ENCODE measurements at regions of chr11 and their contacts with region 1.

Region 1: DNA sequence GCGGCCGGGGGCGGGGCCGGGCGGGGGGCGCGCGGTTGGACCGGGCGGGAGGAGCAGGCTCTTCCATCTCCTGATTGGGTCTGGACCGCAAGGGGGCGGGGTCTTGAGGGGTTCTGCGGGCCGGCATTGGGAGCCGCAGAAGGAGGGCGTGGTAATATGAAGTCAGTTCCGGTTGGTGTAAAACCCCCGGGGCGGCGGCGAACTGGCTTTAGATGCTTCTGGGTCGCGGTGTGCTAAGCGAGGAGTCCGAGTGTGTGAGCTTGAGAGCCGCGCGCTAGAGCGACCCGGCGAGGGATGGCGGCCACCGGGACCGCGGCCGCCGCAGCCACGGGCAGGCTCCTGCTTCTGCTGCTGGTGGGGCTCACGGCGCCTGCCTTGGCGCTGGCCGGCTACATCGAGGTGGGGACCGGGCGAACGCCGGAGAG is at the start of gene APLP2:
- DNase-seq: peak; percentile 96
- H3K4me3 ChIP-seq: peak within 1 kb of the TSS; percentile 80 to 91 (median 83)
- H3K27ac ChIP-seq: peak within 1 kb of the TSS; percentile 77
- H3K4me1 ChIP-seq: peaks cover 22% of the 10 kb centered on the region
- H3K27me3 ChIP-seq: no peaks in the 10 kb centered on the region
- CTCF ChIP-seq: no peak
- total RNA-seq, gene APLP2: 348 to 450 TPM

Region 2: DNA sequence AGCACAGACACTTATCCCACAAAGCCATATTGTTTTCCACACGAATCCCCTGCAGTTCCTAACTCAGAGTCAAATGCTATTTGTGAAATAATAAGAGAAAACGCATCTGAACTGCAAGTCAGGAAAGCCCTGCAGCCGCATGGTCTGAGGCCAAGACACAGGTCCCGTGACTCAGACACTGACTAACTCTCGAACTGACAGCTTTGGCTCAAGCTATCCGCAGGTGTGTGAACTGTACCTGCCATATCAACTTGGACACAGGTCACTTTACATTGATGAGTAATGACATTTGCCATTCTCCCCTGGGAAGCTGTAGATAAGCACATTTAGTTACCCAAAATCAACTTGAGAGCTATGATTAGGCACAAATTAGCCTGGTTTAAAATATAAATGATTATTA is 139.4 kb before region 1 on chr11:
- CTCF ChIA-PET with region 1: no interaction called
- dilution Hi-C with region 1: no loop called
- in situ Hi-C with region 1: no loop called
- intact Hi-C with region 1: loop called (anchors 2 kb)
- DNase-seq: peak; percentile 76
- H3K4me3 ChIP-seq: no peak overlapping the region
- H3K27ac ChIP-seq: no peak overlapping the region
- H3K4me1 ChIP-seq: peaks cover 27% of the 10 kb centered on the region
- H3K27me3 ChIP-seq: no peaks in the 10 kb centered on the region
- CTCF ChIP-seq: no peak

Region 3: GRCh38 chr11:129960216-129961214 is 109.2 kb before region 1 on chr11:
- CTCF ChIA-PET with region 1: no interaction called
- dilution Hi-C with region 1: no loop called
- in situ Hi-C with region 1: no loop called
- intact Hi-C with region 1: no loop called
- DNase-seq: peak; percentile 84
- H3K4me3 ChIP-seq: no peak overlapping the region
- H3K27ac ChIP-seq: no peak overlapping the region
- H3K4me1 ChIP-seq: peaks cover 12% of the 10 kb centered on the region
- H3K27me3 ChIP-seq: no peaks in the 10 kb centered on the region
- CTCF ChIP-seq: no peak

Region 4: GRCh38 chr11:129992161-129992944 is 77.3 kb before region 1 on chr11:
- CTCF ChIA-PET with region 1: no interaction called
- dilution Hi-C with region 1: no loop called
- in situ Hi-C with region 1: no loop called
- intact Hi-C with region 1: loop called (anchors 2 kb)
- DNase-seq: peak; percentile 52
- H3K4me3 ChIP-seq: no peak overlapping the region
- H3K27ac ChIP-seq: no peak overlapping the region
- H3K4me1 ChIP-seq: no peaks in the 10 kb centered on the region
- H3K27me3 ChIP-seq: no peaks in the 10 kb centered on the region
- CTCF ChIP-seq: peak; percentile 21 to 44

Region 5: GRCh38 chr11:130022798-130023583 is 46.7 kb before region 1 on chr11:
- CTCF ChIA-PET with region 1: no interaction called
- dilution Hi-C with region 1: no loop called
- in situ Hi-C with region 1: no loop called
- intact Hi-C with region 1: loop called (anchors 5 kb)
- DNase-seq: peak; percentile 74
- H3K4me3 ChIP-seq: no peak overlapping the region
- H3K27ac ChIP-seq: peak overlapping the region; percentile 18
- H3K4me1 ChIP-seq: peaks cover 18% of the 10 kb centered on the region
- H3K27me3 ChIP-seq: no peaks in the 10 kb centered on the region
- CTCF ChIP-seq: no peak

Region 6: DNA sequence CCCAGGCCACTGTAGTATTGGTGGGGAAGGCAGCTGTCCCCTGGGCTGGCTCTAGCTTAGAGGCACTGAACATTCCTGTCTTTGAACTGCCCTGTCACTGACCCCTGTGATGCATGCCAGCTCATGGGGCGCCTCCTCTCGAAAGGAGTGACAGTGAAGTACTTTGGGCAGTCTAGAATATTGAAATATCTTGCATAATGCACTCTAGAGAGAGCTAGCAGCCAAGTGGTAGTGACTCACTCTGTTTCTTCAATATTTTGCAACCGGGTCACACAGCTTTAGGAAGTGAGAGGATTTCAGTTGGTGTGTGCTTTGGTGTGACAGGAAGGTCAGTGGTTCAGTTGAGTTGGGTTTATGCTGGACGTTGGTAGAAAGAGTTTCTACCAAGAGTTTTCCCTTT is 54.4 kb after region 1 on chr11:
- CTCF ChIA-PET with region 1: no interaction called
- dilution Hi-C with region 1: no loop called
- in situ Hi-C with region 1: no loop called
- intact Hi-C with region 1: loop called (anchors 2 kb)
- DNase-seq: peak; percentile 89
- H3K4me3 ChIP-seq: no peak overlapping the region
- H3K27ac ChIP-seq: peak overlapping the region; percentile 21
- H3K4me1 ChIP-seq: peaks cover 40% of the 10 kb centered on the region
- H3K27me3 ChIP-seq: no peaks in the 10 kb centered on the region
- CTCF ChIP-seq: peak in 1 of 2 donors; percentile 16